ENCODE measurements at regions of chr17 and their contacts with region 1.

Region 1: GRCh38 chr17:60473788-60474187 is 51.5 kb downstream of the CHCT1 start:
- DNase-seq: no peak
- ATAC-seq: no peak
- H3K4me3 ChIP-seq: no peak overlapping the region
- H3K27ac ChIP-seq: no peak overlapping the region
- H3K4me1 ChIP-seq: peaks cover 20% of the 10 kb centered on the region
- H3K27me3 ChIP-seq: no peaks in the 10 kb centered on the region
- CTCF ChIP-seq: no peak

Region 2: GRCh38 chr17:60493791-60494712 is 20.3 kb after region 1 on chr17:
- intact Hi-C with region 1: loop called in 1 of 2 experiments (anchors 1 kb)
- DNase-seq: no peak
- ATAC-seq: peak; percentile 79 to 97 (median 94)
- H3K4me3 ChIP-seq: no peak overlapping the region
- H3K27ac ChIP-seq: peak overlapping the region; percentile 76
- H3K4me1 ChIP-seq: peaks cover 5% of the 10 kb centered on the region
- H3K27me3 ChIP-seq: no peaks in the 10 kb centered on the region
- CTCF ChIP-seq: no peak

Region 3: GRCh38 chr17:60630352-60630751 is 156.6 kb after region 1 on chr17:
- intact Hi-C with region 1: loop called in 1 of 2 experiments (anchors 10 kb)
- DNase-seq: peak in 1 of 2 donors; percentile 23
- ATAC-seq: no peak
- H3K4me3 ChIP-seq: no peak overlapping the region
- H3K27ac ChIP-seq: peak overlapping the region; percentile 20
- H3K4me1 ChIP-seq: peaks cover 23% of the 10 kb centered on the region
- H3K27me3 ChIP-seq: no peaks in the 10 kb centered on the region
- CTCF ChIP-seq: no peak

Measured in psoas muscle (tissue), 8 donors.